BJ (cell line): ENCODE measurements at regions of chr2 and their contacts with region 1.

Region 1: GRCh38 chr2:41853427-41854216 is 194.2 kb upstream of the PKDCC start:
- DNase-seq: no peak
- H3K4me3 ChIP-seq: no peak overlapping the region
- H3K27me3 ChIP-seq: peaks cover 2% of the 10 kb centered on the region
- CTCF ChIP-seq: peak; percentile 74

Region 2: DNA sequence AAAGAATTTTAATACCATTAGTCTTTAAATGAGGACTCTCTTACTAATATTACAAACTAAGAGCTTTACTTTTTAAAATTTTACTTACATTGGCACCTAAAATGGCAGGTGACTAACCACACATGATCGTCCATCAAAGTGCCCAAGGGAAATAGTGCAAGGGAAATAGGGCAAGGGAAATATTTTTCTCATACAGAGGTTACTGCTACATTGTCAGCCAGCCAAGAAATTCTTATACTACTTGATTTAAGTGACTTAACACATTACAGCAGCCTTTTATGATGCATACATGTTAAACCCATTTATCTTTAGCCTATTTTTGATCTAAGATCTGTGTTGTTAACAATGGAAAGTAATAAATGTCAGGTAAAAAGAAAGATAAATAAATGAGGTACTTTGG is 393.0 kb before region 1 on chr2:
- CTCF ChIA-PET with region 1: no interaction called
- POLR2A ChIA-PET with region 1: no interaction called
- DNase-seq: no peak
- H3K4me3 ChIP-seq: no peak overlapping the region
- H3K27me3 ChIP-seq: no peaks in the 10 kb centered on the region
- CTCF ChIP-seq: no peak

Region 3: GRCh38 chr2:41840702-41841551 is 12.7 kb before region 1 on chr2:
- CTCF ChIA-PET with region 1: interaction called, 48 read pairs
- POLR2A ChIA-PET with region 1: no interaction called
- DNase-seq: peak; percentile 84
- H3K4me3 ChIP-seq: peak overlapping the region; percentile 65
- H3K27me3 ChIP-seq: peaks cover 1% of the 10 kb centered on the region; the same call in 1 of the 2 replicates
- CTCF ChIP-seq: peak; percentile 99

Region 4: GRCh38 chr2:41879235-41879916 is 25.8 kb after region 1 on chr2:
- CTCF ChIA-PET with region 1: interaction called, 12 read pairs
- POLR2A ChIA-PET with region 1: no interaction called
- DNase-seq: no peak
- H3K4me3 ChIP-seq: no peak overlapping the region
- H3K27me3 ChIP-seq: peaks cover 2% of the 10 kb centered on the region; the same call in 1 of the 2 replicates
- CTCF ChIP-seq: no peak